ENCODE measurements at regions of chr11 and their contacts with region 1.

Region 1: DNA sequence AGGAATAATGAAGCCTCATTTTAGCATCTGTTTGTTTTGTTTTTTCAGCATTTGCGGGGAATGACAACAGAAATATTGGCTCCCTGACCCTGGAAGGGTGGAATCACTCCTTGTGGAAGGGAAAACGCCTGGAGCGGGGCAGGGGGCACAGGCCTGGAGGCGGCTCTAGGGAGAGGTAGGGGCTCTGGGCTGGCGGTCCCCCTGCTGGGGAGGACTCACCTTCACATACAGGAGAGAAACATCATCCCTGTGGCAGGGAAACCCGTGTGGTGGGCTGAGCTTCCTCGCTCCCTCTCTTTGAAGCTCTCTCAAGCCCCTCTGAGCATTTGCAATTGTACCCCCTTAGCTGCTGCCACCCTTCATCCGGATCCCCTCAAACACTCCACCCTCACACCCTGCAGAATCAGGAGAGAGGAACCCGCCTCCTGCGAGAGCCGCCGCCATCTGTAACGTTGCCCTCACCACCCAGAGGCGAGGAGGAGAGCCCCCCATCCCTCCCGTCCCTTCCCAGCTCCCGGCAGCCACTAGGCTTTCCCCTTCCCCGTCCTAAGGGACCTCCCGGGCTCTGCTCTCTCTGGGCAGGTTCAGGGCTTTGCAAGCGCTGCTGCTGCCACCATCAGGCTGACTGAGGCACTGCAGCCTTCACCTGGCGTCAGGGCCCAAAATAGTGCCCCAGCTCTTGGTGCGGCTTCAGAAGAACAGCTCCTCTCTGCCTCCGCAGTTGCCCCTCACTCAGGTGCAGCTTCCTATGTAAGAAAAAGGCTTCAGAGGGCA is 10.4 kb downstream of the KIRREL3 start:
- DNase-seq: peak in 7 of 9 donors; percentile 2 to 59 (median 20)
- ATAC-seq: peak; percentile 58
- H3K4me3 ChIP-seq: no peak overlapping the region
- H3K4me3 Mint-ChIP-seq: no peak overlapping the region
- H3K27ac ChIP-seq: no peak overlapping the region
- H3K27ac Mint-ChIP-seq: no peak overlapping the region
- H3K4me1 ChIP-seq: no peaks in the 10 kb centered on the region
- H3K4me1 Mint-ChIP-seq: peaks cover 0 to 2% (median 0%) of the 10 kb centered on the region in 7 donors
- H3K27me3 ChIP-seq: no peaks in the 10 kb centered on the region
- H3K27me3 Mint-ChIP-seq: peaks cover 7 to 49% (median 31%) of the 10 kb centered on the region in 5 donors

Region 2: DNA sequence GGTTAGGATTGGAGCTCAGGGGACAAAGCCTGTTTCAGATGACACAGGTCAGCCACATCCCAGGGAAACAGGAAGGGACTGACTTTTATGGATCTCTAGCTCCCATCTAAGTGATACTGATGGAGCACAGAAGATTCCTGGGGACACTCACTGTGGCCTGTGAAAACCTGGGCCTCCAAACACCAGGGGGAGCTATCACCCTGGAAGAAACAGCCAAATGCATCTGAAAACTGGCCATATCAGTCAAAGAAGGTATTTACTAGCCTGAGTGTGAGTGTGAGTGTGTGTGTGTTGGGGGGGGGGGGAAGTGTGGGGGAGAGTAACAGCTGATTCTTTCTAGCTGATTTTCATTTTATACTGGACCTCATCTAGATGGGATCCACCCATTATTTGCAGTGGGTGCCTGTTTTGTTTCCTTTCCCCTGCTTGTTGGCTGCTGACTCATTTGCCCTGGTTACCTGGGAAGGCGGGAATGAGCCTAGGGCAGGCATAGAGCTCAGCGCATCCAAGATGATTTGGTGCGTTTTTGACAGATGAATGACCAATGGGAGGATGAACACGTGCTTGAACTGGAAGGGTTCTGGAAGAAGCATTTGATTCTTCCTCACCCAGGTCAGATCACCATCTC is 273.6 kb before region 1 on chr11:
- CTCF ChIA-PET with region 1: no interaction called
- POLR2A ChIA-PET with region 1: no interaction called
- intact Hi-C with region 1: loop called in 1 of 2 experiments (anchors 1 kb)
- DNase-seq: peak in 1 of 9 donors; percentile 26
- ATAC-seq: no peak
- H3K4me3 ChIP-seq: no peak overlapping the region
- H3K4me3 Mint-ChIP-seq: no peak overlapping the region
- H3K27ac ChIP-seq: no peak overlapping the region
- H3K27ac Mint-ChIP-seq: no peak overlapping the region
- H3K4me1 ChIP-seq: no peaks in the 10 kb centered on the region
- H3K4me1 Mint-ChIP-seq: no peaks in the 10 kb centered on the region
- H3K27me3 ChIP-seq: no peaks in the 10 kb centered on the region
- H3K27me3 Mint-ChIP-seq: peaks cover 6 to 53% (median 37%) of the 10 kb centered on the region in 5 donors

Region 3: GRCh38 chr11:126963603-126964363 is 26.3 kb before region 1 on chr11:
- CTCF ChIA-PET with region 1: no interaction called
- POLR2A ChIA-PET with region 1: no interaction called
- intact Hi-C with region 1: no loop called
- DNase-seq: no peak
- ATAC-seq: no peak
- H3K4me3 ChIP-seq: no peak overlapping the region
- H3K4me3 Mint-ChIP-seq: no peak overlapping the region
- H3K27ac ChIP-seq: no peak overlapping the region
- H3K27ac Mint-ChIP-seq: no peak overlapping the region
- H3K4me1 ChIP-seq: no peaks in the 10 kb centered on the region
- H3K4me1 Mint-ChIP-seq: no peaks in the 10 kb centered on the region
- H3K27me3 ChIP-seq: no peaks in the 10 kb centered on the region
- H3K27me3 Mint-ChIP-seq: peaks cover 2 to 55% (median 38%) of the 10 kb centered on the region in 5 donors

Measured in naive thymus-derived CD4-positive, alpha-beta T cell (primary cell).